Naive thymus-derived CD4-positive, alpha-beta T cell (primary cell): ENCODE measurements at regions of chr11 and their contacts with region 1.

Region 1: DNA sequence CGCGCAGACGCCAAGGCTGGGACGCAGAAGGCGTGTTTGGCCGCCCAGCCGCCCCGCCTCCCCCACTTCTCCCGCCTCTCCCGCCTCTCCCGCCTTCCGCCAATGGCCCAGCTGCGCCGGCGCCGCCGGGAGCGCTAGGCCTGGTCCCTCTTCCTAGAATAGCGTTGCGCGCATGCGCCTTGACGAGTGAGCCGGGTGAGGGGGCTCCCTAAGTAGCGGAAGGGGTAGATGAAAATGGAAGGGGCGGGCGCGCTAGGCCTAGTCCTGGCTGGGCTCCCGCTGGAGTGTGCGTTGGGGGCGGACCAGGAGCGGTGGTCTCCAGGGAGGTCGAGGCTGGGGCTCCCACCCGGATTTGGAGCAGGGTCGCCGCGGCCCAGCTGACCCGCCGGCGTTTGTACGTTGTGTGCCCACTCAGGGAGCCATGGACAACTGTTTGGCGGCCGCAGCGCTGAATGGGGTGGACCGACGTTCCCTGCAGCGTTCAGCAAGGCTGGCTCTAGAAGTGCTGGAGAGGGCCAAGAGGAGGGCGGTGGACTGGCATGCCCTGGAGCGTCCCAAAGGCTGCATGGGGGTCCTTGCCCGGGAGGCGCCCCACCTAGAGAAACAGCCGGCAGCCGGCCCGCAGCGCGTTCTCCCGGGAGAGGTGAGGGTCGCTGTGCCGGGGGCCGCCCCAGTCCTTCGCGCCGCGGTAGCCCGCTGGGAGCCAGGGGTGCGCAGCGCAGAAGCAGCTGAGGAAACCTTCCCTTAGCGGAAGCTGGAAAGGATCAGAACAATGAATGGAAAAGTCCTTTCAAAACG is at the start of gene AKIP1:
- DNase-seq: peak; percentile 48 to 87 (median 61)
- ATAC-seq: peak; percentile 75
- H3K4me3 ChIP-seq: peak within 1 kb of the TSS; percentile 79
- H3K4me3 Mint-ChIP-seq: peak within 1 kb of the TSS; percentile 86 to 95 (median 92)
- H3K27ac ChIP-seq: peak within 1 kb of the TSS; percentile 71
- H3K27ac Mint-ChIP-seq: peak within 1 kb of the TSS; percentile 58 to 91 (median 78)
- H3K4me1 ChIP-seq: peaks cover 0 to 4% of the 10 kb centered on the region in 2 donors
- H3K4me1 Mint-ChIP-seq: peaks cover 26 to 51% (median 41%) of the 10 kb centered on the region in 7 donors
- H3K27me3 ChIP-seq: no peaks in the 10 kb centered on the region
- H3K27me3 Mint-ChIP-seq: peaks cover 0 to 24% (median 0%) of the 10 kb centered on the region in 5 donors
- total RNA-seq, gene AKIP1: 5.6 to 20.9 (median 11.2) TPM

Region 2: GRCh38 chr11:8688414-8689362 is 222.5 kb before region 1 on chr11:
- CTCF ChIA-PET with region 1: no interaction called
- POLR2A ChIA-PET with region 1: interaction called, 5 read pairs
- intact Hi-C with region 1: loop called in 1 of 2 experiments (anchors 2 kb)
- DNase-seq: peak; percentile 50 to 86 (median 61)
- ATAC-seq: peak; percentile 92
- H3K4me3 ChIP-seq: peak overlapping the region; percentile 80
- H3K4me3 Mint-ChIP-seq: peak overlapping the region; percentile 89 to 99 (median 96)
- H3K27ac ChIP-seq: peak overlapping the region; percentile 85
- H3K27ac Mint-ChIP-seq: peak overlapping the region; percentile 90 to 99 (median 96)
- H3K4me1 ChIP-seq: peaks cover 15 to 17% of the 10 kb centered on the region in 2 donors
- H3K4me1 Mint-ChIP-seq: peaks cover 20 to 63% (median 45%) of the 10 kb centered on the region in 7 donors
- H3K27me3 ChIP-seq: no peaks in the 10 kb centered on the region
- H3K27me3 Mint-ChIP-seq: no peaks in the 10 kb centered on the region

Region 3: DNA sequence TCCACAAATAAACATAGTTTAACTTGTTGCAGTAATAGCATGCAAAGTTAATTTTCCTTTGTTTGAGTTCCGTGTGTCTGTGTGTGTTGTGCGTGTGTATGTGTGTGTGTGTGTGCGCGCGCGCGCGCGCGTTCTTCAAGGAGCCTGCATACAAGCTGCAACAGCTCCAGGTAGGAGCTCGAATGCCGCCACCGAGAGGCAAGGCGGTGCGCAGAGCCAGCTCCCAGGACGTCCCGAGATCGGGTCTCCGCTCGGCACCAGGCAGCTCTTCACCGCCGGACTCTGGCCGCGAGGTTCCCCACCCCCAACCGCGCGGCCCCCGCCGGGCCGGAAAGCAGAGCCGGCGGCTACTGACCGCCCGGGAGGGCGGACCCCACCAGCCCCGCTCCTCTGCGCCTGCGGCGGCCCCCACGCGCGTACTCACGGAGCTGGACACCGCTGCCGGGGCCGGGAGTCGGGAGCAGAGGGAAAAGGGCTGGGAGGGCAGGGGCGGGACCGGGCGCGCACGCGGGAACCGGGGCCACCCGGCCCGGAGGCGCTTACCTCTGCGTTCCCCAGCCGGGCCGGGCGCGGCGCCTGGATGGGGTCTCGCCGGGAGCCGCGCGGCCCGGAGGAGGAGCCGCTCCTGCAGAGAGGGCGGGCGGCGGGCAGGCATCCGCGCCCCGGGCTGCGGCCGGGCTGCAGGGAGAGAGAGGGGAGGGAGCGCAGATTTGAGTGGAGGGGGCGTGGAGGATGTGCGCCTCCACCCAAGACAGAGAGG is 40.6 kb before region 1 on chr11:
- CTCF ChIA-PET with region 1: interaction called, 3 read pairs
- POLR2A ChIA-PET with region 1: no interaction called
- intact Hi-C with region 1: loop called in 1 of 2 experiments (anchors 5 kb)
- DNase-seq: no peak
- ATAC-seq: no peak
- H3K4me3 ChIP-seq: no peak overlapping the region
- H3K4me3 Mint-ChIP-seq: peak overlapping the region; percentile 45 to 79 (median 68)
- H3K27ac ChIP-seq: no peak overlapping the region
- H3K27ac Mint-ChIP-seq: no peak overlapping the region
- H3K4me1 ChIP-seq: no peaks in the 10 kb centered on the region
- H3K4me1 Mint-ChIP-seq: peaks cover 8 to 21% (median 14%) of the 10 kb centered on the region in 7 donors
- H3K27me3 ChIP-seq: peaks cover 0 to 7% of the 10 kb centered on the region in 2 donors
- H3K27me3 Mint-ChIP-seq: peaks cover 24 to 70% (median 56%) of the 10 kb centered on the region in 5 donors

Region 4: DNA sequence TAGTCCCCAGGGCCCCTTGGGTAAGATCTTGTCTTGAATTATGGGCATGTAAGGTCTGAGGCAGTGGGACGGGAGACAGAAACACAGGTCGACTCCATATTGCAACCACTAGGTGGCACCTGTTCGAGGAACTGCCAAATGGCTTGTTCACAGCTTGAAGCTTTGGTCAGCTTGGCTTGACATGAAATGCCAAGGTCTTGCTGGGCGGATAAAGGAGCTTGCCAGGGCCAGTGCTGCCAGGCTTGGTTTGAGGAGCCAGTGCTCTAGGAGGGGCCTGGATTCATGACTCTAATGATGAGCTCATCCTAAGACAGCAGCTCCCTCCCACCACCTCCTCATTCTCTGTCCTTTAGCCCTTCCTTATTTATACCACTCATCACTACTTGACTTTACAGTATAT is 104.4 kb after region 1 on chr11:
- CTCF ChIA-PET with region 1: no interaction called
- POLR2A ChIA-PET with region 1: no interaction called
- intact Hi-C with region 1: loop called in 1 of 2 experiments (anchors 2 kb)
- DNase-seq: peak; percentile 20 to 59 (median 45)
- ATAC-seq: peak; percentile 82
- H3K4me3 ChIP-seq: no peak overlapping the region
- H3K4me3 Mint-ChIP-seq: no peak overlapping the region
- H3K27ac ChIP-seq: no peak overlapping the region
- H3K27ac Mint-ChIP-seq: no peak overlapping the region
- H3K4me1 ChIP-seq: peaks cover 0 to 9% of the 10 kb centered on the region in 2 donors
- H3K4me1 Mint-ChIP-seq: peaks cover 0 to 28% (median 18%) of the 10 kb centered on the region in 7 donors
- H3K27me3 ChIP-seq: no peaks in the 10 kb centered on the region
- H3K27me3 Mint-ChIP-seq: peaks cover 0 to 20% (median 7%) of the 10 kb centered on the region in 5 donors

Region 5: DNA sequence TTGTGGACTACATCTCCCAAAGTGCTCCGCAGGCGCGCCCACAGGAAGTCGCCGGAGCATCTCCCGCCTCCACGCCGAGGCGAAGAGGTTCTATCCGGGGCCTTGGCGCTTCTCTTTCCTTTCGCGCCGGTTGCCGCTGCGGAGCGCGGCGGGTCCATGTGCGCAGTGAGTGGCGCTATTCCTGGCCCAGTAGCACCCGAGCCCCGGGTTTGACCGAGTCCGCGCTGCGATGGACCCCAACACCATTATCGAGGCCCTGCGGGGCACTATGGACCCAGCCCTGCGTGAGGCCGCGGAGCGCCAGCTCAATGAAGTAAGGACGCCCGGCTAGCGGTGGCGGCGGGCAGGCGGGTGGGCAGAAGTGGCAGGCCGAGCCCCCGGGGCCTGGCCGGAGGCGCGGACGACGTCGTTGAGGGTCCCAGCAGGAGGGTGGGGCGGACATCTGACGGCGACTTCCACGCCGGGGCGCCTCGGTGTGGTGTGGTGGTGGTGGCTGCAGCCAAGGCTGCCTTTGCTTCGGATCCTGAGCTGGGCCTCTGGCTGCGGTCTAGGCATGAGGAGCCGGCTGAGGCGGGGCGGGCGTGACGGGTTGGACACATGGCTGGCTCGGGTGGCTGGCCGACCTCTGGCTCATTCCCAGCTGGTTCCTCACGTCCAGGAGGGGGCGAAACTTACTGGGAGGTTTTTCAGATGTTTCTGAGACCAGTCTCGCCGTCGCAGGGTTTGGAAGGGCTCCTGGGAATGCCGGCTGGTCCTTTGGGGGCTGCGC is 473.5 kb after region 1 on chr11 and contains the start of gene IPO7:
- CTCF ChIA-PET with region 1: no interaction called
- POLR2A ChIA-PET with region 1: no interaction called
- intact Hi-C with region 1: loop called in 1 of 2 experiments (anchors 5 kb)
- DNase-seq: peak; percentile 68 to 88 (median 84)
- ATAC-seq: peak; percentile 99
- H3K4me3 ChIP-seq: peak within 1 kb of the TSS; percentile 78
- H3K4me3 Mint-ChIP-seq: peak within 1 kb of the TSS; percentile 89 to 98 (median 94)
- H3K27ac ChIP-seq: peak within 1 kb of the TSS; percentile 88
- H3K27ac Mint-ChIP-seq: peak within 1 kb of the TSS; percentile 79 to 94 (median 91)
- H3K4me1 ChIP-seq: peaks cover 11 to 15% of the 10 kb centered on the region in 2 donors
- H3K4me1 Mint-ChIP-seq: peaks cover 25 to 51% (median 38%) of the 10 kb centered on the region in 7 donors
- H3K27me3 ChIP-seq: no peaks in the 10 kb centered on the region
- H3K27me3 Mint-ChIP-seq: no peaks in the 10 kb centered on the region
- total RNA-seq, gene IPO7: 47.3 to 105 (median 61.3) TPM